ENCODE measurements at regions of chr5 and their contacts with region 1.

Region 1: DNA sequence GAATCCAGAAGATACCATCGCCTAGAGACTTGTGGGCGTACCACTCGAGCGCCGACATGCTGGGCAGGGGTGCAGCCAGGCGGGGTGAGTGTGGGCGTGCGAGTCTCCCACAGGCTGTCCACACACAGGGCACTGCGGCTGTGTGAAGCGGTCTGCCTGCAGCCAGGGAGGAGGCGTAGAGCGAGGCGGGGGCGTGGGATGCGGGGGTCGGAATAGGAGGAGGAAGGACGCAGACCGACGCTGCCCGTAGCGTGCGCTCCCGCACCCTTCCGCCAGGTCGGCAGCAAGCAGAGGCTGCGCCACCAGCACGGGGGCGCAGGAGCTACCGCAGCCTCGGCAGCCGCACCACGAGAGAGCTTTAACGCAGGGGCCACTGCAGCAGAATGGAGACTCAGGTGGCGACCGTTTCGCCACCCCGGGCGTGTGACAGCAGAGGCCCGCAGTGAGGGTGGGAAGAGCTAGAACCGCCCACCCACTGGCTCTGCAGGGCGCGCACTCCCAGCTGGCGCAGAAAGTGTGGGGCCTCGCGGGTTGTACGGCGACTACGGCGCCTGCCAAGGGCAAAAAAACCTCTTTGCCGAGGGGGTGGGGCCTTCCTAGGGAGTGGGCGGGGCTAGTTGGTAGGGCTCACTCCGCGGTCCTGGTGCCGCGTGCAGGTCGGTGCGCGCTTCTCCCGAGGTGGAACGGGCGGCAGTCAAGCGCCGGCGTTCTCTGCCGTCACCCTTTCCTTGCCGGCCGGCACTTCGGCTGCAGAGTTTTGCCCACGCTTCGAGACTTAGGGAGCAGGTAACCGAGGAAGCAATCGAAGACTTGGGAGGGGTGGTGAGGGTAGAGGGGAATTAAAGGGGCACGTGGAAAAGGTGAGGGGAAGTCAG is at the starts of genes MBLAC2 and POLR3G:
- DNase-seq: peak; percentile 91 to 94
- H3K4me3 ChIP-seq: peak within 1 kb of the TSS; percentile 62 to 95 (median 91)
- H3K27ac ChIP-seq: peak within 1 kb of the TSS; percentile 43 to 73 (median 53)
- H3K4me1 ChIP-seq: peaks cover 15 to 20% of the 10 kb centered on the region in 2 donors
- H3K27me3 ChIP-seq: no peaks in the 10 kb centered on the region
- CTCF ChIP-seq: peak in 4 of 6 experiments; percentile 53 to 65 (median 57)
- POLR2A ChIP-seq: peak in 1 of 2 donors; percentile 87
- total RNA-seq, gene MBLAC2: 5.1 to 7.4 (median 6.5) TPM
- total RNA-seq, gene POLR3G: 1.0 to 4.0 (median 1.8) TPM

Region 2: GRCh38 chr5:89954916-89955315 is 519.6 kb before region 1 on chr5:
- intact Hi-C with region 1: no loop called
- DNase-seq: no peak
- H3K4me3 ChIP-seq: no peak overlapping the region
- H3K27ac ChIP-seq: no peak overlapping the region
- H3K4me1 ChIP-seq: no peaks in the 10 kb centered on the region
- H3K27me3 ChIP-seq: no peaks in the 10 kb centered on the region
- CTCF ChIP-seq: no peak
- POLR2A ChIP-seq: no peak

Region 3: DNA sequence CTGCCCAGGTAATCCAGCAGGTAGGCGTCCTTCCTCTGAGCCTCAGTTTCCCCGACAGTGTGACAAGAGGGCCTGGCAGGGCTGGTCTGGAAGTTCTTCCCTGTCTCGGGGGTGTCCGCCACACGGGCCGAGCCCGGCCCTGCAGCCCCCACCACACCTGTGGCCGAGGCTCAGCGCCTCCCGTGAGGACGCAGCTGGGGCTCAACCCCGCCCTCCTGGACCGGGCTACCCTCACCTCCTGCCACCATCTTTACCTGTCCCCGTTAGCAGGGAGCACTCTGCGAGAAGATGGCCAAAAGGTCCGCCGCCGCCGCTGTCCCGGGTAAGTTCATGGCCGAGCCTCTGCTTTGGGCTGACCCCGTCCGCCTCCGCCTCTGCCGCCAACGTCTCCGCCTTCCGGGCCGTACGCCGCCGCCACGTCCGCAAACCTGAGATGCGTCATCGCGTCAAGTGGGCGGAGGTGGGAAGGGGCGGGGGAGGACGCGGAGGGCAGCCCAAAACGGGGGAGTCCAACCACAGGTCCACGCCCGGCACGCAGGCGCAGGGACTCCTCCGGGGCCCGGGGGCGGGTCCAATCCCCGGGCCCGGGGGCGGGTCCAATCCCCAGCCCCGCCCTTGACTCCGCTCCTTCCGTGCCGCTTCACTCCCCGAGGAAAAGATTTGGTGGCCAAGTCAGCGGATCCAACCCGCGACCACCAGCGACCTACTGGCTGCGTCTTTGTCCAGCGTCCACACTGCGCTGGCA is 54.9 kb after region 1 on chr5 and contains the start of gene LYSMD3:
- intact Hi-C with region 1: loop called (anchors 10 kb)
- DNase-seq: peak; percentile 97 to 98
- H3K4me3 ChIP-seq: peak within 1 kb of the TSS; percentile 72 to 94 (median 79)
- H3K27ac ChIP-seq: peak within 1 kb of the TSS; percentile 67 to 93 (median 91)
- H3K4me1 ChIP-seq: peaks cover 14 to 23% of the 10 kb centered on the region in 2 donors
- H3K27me3 ChIP-seq: no peaks in the 10 kb centered on the region
- CTCF ChIP-seq: no peak
- POLR2A ChIP-seq: peak; percentile 75 to 98
- total RNA-seq, gene LYSMD3: 20.9 to 32.7 (median 27.2) TPM

Measured in thyroid gland (tissue), 4 donors.